Testis (tissue), 5 donors: ENCODE measurements at regions of chr9 and their contacts with region 1.

Region 1: DNA sequence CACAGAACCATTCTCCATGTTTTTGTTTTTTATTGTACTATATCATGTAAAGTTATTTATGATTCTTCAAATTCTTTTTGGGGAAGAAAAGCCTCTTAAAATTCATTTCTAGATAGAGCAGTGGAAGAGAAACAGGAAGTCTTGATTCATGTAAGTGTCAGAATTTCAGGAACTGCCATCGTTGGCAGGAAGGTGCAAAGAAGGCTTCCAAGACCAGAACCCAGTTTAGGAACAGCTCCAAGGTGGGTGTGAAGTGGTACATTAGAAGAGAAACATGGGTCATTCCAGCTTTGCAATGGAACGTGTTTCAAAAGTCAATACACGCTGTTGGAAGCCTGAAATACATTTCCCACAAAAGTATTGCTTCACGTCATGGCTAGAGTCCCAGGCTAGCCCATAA is 14.8 kb downstream of the SAXO1 start:
- DNase-seq: no peak
- H3K4me3 ChIP-seq: no peak overlapping the region
- H3K27ac ChIP-seq: no peak overlapping the region
- H3K4me1 ChIP-seq: no peaks in the 10 kb centered on the region
- H3K27me3 ChIP-seq: no peaks in the 10 kb centered on the region
- CTCF ChIP-seq: no peak
- POLR2A ChIP-seq: no peak

Region 2: GRCh38 chr9:18250053-18250452 is 768.1 kb before region 1 on chr9:
- intact Hi-C with region 1: loop called (anchors 5 kb)
- DNase-seq: no peak
- H3K4me3 ChIP-seq: no peak overlapping the region
- H3K27ac ChIP-seq: no peak overlapping the region
- H3K4me1 ChIP-seq: peaks cover 1% of the 10 kb centered on the region
- H3K27me3 ChIP-seq: no peaks in the 10 kb centered on the region
- CTCF ChIP-seq: no peak
- POLR2A ChIP-seq: no peak